Posterior cingulate gyrus (tissue), 11 donors: ENCODE measurements at regions of chr10 and their contacts with region 1.

Region 1: DNA sequence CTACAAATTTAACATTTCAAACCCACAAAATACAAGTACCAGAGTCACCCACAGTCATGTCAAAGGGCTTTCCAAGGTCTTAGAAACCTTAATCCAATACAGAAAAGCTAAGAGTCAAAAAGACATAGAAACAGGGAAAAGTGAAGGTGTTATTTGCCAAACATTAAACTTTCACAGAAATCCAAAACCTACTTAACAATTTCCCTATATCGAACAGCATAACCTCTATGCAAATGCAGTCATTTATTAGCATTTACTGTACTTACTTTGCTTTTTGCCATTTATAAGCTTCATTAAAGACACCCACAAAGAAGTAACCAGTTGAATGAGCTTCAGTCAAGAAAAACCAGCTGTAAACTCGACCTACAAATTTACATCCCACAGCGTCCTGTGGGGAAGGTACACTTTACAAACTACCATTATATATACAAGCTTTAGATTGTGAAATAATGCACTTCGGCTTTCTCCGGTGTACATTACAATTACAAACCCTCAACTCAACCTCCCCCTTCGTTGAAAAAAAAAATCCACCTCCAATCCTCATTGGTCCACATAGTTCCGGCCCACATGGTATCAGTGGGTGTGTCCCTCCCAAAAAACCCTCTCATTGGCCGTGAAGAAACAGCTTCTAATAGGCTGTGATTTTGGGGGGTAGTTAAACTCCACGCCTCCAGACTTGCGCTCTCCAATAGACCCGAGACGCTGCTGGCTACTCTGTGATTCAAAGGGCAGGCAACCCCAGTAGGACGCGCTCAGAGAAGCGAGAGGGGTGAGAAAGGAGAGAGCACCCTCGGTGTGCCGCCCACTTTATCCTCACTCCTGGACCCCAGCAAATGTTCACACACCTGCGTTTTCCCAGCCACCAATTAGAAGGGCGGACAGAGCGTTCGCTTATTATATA is 1.4 kb downstream of the PANK1 start:
- DNase-seq: peak; percentile 70 to 96 (median 80)

Region 2: DNA sequence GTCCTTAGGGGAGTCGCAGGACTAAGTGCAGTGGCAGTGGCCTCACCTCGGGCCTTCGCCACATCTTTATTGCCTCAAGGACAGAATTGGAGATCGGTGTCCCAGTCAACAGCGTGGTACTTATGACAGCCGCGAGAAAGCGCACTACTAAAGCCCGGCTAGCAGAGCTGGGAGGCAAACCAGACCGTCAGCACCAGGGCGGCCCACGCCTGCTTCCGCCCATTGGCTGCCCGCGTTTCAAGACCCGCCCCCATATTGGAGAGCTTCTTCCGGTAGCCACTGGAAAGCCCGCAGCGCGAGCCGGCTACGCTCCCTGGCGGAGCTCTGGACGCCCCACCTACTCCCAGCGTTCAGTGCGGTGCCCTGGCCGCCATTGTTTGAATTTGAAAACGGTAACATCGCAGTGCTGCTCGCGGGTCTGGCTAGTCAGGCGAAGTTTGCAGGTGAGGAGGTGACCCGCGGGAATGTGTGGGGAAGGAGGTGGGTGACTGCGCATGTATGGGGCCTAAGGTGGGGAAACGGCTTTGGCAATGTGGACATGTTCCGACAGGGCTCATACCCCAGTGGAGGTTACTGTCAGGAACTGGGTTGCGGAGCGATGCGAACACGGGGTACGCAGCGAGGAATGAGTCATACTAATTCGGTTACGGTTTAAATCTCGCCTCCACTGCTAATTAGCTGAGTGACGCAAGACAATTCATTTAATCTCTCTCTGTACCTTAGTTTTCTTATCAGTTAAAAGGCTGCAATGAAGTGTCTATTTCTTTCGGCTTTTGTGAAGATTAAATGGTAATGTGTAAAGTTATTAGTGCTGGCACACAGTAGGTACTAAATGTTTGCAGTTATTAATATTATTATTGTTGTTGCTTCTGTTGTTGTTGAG is 57.8 kb after region 1 on chr10 and contains the start of gene KIF20B:
- intact Hi-C with region 1: loop called (anchors 2 kb)
- DNase-seq: peak; percentile 94 to 99 (median 96)